Caco-2 (cell line): ENCODE measurements at regions of chr1 and their contacts with region 1.

Region 1: GRCh38 chr1:156270314-156270713 is 12.3 kb downstream of the SMG5 start:
- DNase-seq: no peak
- H3K4me3 ChIP-seq: no peak overlapping the region
- H3K4me3 Mint-ChIP-seq: no peak overlapping the region
- H3K27ac Mint-ChIP-seq: no peak overlapping the region
- H3K4me1 ChIP-seq: no peaks in the 10 kb centered on the region
- H3K4me1 Mint-ChIP-seq: no peaks in the 10 kb centered on the region
- H3K27me3 ChIP-seq: no peaks in the 10 kb centered on the region
- H3K27me3 Mint-ChIP-seq: no peaks in the 10 kb centered on the region
- CTCF ChIP-seq: no peak

Region 2: DNA sequence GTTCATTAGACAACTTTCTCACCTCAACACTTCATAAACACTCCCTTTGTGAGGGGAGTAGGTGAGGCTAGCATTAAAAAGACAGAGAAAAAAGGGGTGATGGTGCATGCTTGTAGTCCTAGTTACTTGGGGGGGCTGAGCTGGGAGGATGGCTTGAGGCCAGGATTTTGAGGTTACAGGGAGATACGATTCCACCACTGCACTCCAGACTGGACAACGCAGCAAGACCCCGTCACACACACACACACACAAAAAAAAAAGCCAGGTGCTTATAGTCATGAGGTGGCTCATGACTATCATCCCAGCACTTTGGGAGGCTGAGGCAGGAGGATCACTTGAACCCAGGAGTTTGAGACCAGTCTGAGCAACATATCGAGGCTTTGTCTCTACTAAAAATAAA is 442.9 kb before region 1 on chr1:
- CTCF ChIA-PET with region 1: no interaction called
- POLR2A ChIA-PET with region 1: interaction called, 11 read pairs
- intact Hi-C with region 1: no loop called
- DNase-seq: no peak
- H3K4me3 ChIP-seq: no peak overlapping the region
- H3K4me3 Mint-ChIP-seq: no peak overlapping the region
- H3K27ac Mint-ChIP-seq: no peak overlapping the region
- H3K4me1 ChIP-seq: no peaks in the 10 kb centered on the region
- H3K4me1 Mint-ChIP-seq: no peaks in the 10 kb centered on the region
- H3K27me3 ChIP-seq: no peaks in the 10 kb centered on the region
- H3K27me3 Mint-ChIP-seq: no peaks in the 10 kb centered on the region
- CTCF ChIP-seq: no peak